Activated CD4-positive, alpha-beta T cell treated with anti-CD3 and anti-CD28 coated beads, Interleukin-2, amount 10 ng/mL, durations not matched to agents 24 days and 14 days (primary cell): ENCODE measurements at regions of chr13 and their contacts with region 1.

Region 1: DNA sequence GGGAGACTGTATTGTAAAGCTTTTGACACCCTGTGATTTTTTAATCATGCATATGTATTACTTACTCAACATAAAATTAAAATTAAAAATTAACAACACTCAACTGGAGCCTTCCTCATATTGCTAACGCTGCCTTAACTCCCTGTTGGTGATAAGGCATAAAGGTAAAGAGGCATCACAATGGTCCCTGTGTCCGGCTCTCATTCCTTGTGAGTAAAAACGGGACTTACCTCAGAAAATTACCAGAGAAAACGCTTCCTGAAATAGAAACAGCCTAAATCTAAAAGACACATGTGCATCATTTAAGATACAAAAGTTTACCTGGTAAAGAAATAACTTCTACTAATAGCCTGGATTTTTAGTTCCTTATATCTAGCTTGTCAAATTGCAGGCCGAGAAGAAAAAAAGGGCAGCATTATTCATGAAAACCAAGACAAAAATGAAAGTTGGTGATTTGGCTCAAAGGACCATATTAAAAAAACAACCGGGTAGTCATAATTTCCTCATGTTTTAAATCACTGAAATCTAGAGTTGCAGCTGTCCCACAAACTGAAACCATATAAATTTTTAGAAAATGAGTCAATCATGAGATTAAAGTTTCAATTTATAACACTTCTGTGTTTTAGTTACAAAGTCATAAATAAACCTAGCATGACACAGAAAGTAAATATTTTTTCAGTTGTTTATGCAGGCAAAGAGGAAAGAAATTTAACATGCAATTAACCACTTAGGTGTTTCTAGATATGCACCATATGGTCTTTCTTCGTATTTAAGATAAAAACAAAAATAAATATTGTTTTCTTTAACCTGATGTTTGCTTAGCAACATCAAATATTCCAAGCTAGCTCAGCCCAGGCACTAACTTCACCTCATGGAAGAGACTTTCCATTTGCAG is 94.7 kb downstream of the MIPEP start:
- DNase-seq: no peak
- H3K4me3 Mint-ChIP-seq: no peak overlapping the region
- H3K27ac Mint-ChIP-seq: no peak overlapping the region
- H3K4me1 Mint-ChIP-seq: peaks cover 6% of the 10 kb centered on the region
- H3K27me3 Mint-ChIP-seq: no peaks in the 10 kb centered on the region

Region 2: DNA sequence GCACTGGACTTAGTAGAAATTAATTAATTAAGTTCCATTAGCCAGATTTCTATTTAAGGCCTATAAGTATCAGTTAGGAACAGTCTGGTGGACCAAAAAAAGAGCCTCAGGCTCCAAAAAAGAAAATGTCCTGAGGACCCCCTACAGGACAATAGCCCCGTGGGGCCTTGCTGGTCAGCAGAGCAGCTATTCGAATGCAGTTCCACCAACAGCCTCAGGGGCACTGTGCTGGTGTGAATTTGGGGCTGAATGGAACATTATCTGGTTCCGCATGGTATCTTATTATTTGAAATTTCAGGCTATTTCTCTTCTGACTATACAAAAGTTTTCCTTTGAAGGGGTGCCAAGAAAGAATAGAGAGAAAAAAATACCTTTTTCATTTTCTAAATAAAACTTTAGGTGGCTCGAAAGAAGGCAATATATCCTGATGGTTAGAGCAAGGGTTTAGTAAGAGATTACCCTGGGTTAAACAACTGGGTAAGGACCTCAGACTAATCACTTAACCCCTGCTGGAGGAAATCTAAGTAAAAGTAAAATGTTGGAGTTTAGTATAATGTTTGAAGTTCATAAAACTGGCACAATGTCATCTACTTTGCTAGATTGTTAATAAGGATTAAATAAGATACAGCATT is 52.5 kb before region 1 on chr13:
- intact Hi-C with region 1: loop called (anchors 2 kb)
- DNase-seq: no peak
- H3K4me3 Mint-ChIP-seq: no peak overlapping the region
- H3K27ac Mint-ChIP-seq: no peak overlapping the region
- H3K4me1 Mint-ChIP-seq: peaks cover 19% of the 10 kb centered on the region
- H3K27me3 Mint-ChIP-seq: peaks cover 26% of the 10 kb centered on the region

Region 3: DNA sequence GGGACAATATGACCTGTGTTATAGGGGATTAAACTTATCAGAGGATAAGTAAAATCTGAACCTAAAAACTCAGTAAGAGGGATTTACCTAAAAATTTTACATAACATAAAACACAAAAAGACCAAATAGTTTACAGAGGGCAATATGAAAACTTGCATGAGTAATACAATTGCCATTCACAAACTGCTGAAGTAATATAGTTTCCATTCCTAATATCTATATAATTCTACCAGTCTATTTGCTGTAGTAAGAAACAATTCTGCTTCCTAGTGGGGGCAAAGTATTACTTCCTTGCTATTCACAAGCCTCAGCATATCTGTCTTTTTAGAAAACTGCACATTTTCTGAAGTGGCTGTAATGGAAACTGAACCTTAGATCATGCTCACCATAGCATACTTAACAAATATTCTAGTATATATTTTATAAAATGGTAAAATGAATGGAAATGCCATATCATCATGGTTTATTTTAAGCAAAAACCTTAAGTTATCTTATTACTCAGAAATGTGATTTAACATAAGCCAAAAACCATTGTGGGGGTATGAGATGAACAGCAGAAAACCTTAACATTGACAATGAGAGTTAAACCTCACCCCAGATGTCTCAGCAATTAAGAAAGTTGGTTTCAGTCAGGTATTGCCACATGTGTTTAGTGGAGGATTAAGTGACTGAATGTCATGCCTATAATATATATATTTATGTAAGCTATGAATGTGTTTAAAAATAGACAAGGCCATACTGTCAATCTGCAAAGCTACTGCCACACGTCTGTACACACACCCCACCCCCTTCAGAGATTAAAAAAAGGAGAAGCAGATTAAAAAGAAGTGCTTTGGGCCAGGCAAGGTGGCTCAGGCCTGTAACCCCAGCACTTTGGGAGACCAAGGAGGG is 42.2 kb before region 1 on chr13:
- intact Hi-C with region 1: loop called (anchors 1 kb)
- DNase-seq: no peak
- H3K4me3 Mint-ChIP-seq: no peak overlapping the region
- H3K27ac Mint-ChIP-seq: peak overlapping the region; percentile 46
- H3K4me1 Mint-ChIP-seq: peaks cover 30% of the 10 kb centered on the region
- H3K27me3 Mint-ChIP-seq: peaks cover 2% of the 10 kb centered on the region

Region 4: DNA sequence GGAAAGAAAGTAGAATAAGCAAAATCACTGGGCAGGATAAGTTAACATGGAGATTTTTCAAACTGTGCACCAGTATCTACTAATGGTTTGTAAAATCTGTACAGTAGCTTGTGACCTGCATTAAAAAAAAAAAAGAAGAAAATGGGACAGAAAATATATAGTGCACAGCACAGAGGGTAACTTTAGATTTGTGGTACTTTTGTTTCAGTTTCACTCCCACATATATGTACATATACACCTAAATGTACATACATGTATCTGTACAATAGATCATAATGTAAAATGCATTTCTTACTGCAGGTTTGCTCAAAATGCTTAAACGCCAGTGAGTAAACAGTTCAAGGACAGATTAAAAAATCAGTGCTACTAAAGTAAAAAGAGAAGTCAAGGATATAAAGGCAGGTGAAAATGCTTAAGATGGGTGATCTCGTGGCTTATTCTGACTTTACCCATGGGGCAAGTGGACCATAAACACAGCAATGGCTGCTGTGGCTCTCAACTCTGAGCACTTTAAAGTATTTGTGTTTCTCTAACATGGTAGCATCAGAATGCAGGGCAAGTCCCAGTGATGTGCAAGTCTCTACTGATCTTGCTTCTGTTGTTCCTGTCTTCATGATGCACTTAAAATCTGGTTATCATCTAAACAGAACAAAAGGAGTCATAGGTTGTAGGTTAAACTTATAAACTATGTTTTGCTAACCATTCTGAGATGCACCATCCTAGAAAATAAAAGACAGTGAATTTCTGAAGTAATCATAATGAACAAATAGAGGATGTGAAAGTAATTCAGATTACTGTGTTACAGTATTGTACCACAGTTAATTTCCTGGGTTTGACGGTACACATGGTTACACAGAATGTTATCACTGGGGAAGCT is 17.6 kb before region 1 on chr13:
- intact Hi-C with region 1: no loop called
- DNase-seq: no peak
- H3K4me3 Mint-ChIP-seq: no peak overlapping the region
- H3K27ac Mint-ChIP-seq: no peak overlapping the region
- H3K4me1 Mint-ChIP-seq: peaks cover 8% of the 10 kb centered on the region
- H3K27me3 Mint-ChIP-seq: no peaks in the 10 kb centered on the region

Region 5: GRCh38 chr13:23888658-23889614 is 94.4 kb after region 1 on chr13 and contains the start of gene MIPEP:
- intact Hi-C with region 1: loop called (anchors 10 kb)
- DNase-seq: peak; percentile 97
- H3K4me3 Mint-ChIP-seq: peak within 1 kb of the TSS; percentile 88
- H3K27ac Mint-ChIP-seq: peak within 1 kb of the TSS; percentile 82
- H3K4me1 Mint-ChIP-seq: peaks cover 22% of the 10 kb centered on the region
- H3K27me3 Mint-ChIP-seq: no peaks in the 10 kb centered on the region
- total RNA-seq, gene MIPEP: 10.4 and 10.9 TPM in 2 replicates